Activated naive CD4-positive, alpha-beta T cell treated with anti-CD3 and anti-CD28 coated beads for 36 hours (primary cell): ENCODE measurements at regions of chr11 and their contacts with region 1.

Region 1: GRCh38 chr11:108733479-108734116 is 68.7 kb downstream of the DDX10 start:
- DNase-seq: peak; percentile 72
- H3K4me3 Mint-ChIP-seq: no peak overlapping the region
- H3K27ac Mint-ChIP-seq: peak overlapping the region; percentile 82
- H3K4me1 Mint-ChIP-seq: peaks cover 41% of the 10 kb centered on the region
- H3K27me3 Mint-ChIP-seq: no peaks in the 10 kb centered on the region

Region 2: GRCh38 chr11:108467091-108467823 is 266.3 kb before region 1 on chr11 and contains the start of gene C11orf65:
- CTCF ChIA-PET with region 1: no interaction called
- intact Hi-C with region 1: loop called (anchors 1 kb)
- DNase-seq: peak; percentile 98
- H3K4me3 Mint-ChIP-seq: peak within 1 kb of the TSS; percentile 94
- H3K27ac Mint-ChIP-seq: peak within 1 kb of the TSS; percentile 96
- H3K4me1 Mint-ChIP-seq: peaks cover 8% of the 10 kb centered on the region
- H3K27me3 Mint-ChIP-seq: no peaks in the 10 kb centered on the region
- total RNA-seq, gene C11orf65: 2.2 to 3.1 TPM

Region 3: GRCh38 chr11:108664730-108665525 is 68.7 kb before region 1 on chr11 and contains the start of gene DDX10:
- CTCF ChIA-PET with region 1: interaction called, 3 read pairs
- intact Hi-C with region 1: loop called (anchors 1 kb)
- DNase-seq: peak; percentile 99
- H3K4me3 Mint-ChIP-seq: peak within 1 kb of the TSS; percentile 99
- H3K27ac Mint-ChIP-seq: peak within 1 kb of the TSS; percentile 86
- H3K4me1 Mint-ChIP-seq: peaks cover 38% of the 10 kb centered on the region
- H3K27me3 Mint-ChIP-seq: no peaks in the 10 kb centered on the region
- total RNA-seq, gene DDX10: 36.6 to 43.0 TPM

Region 4: GRCh38 chr11:108752297-108752751 is 18.7 kb after region 1 on chr11:
- CTCF ChIA-PET with region 1: interaction called, 4 read pairs
- intact Hi-C with region 1: loop called (anchors 1 kb)
- DNase-seq: no peak
- H3K4me3 Mint-ChIP-seq: no peak overlapping the region
- H3K27ac Mint-ChIP-seq: no peak overlapping the region
- H3K4me1 Mint-ChIP-seq: peaks cover 43% of the 10 kb centered on the region
- H3K27me3 Mint-ChIP-seq: no peaks in the 10 kb centered on the region

Region 5: DNA sequence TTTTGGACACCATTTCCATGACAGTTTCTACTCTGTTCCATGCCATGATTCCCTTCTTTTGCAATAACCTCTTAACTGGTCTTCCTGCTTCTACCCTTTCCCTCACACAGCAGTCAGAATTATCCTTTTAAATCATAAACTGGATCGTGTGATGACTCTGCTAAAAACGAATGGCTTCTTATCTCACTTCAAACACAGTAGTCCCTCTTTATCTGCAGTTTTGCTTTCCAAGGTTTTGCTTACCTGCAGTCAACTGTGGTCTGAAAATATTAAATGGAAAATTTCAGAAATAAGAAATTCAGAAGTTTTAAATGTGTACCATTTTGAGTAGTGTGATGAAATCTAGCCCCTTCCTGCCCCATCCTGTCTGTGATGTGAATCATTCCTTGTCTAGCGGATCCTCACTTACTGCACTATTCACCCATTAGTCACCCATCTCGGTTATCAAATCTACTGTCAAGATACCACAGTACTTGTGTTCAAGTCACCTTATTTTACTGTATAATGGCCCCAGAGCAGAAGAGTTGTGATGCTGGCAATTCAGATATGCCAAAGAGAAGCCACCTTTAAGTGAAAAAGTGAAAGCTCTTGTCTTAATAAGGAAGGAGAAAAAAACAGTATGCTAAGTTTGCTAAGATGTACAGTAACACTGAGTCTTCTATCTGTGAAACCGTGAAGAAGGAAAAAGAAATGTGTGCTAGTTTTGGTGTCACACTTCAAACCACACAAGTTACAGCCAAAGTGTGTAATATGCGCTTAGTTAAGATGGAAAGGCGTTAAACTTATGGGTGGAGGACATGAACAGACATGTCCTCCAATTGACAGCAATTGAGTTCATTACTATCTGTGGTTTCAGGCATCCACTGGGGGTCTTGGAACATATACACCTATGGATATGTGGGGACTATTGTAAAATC is 214.3 kb after region 1 on chr11:
- CTCF ChIA-PET with region 1: no interaction called
- intact Hi-C with region 1: loop called (anchors 1 kb)
- DNase-seq: no peak
- H3K4me3 Mint-ChIP-seq: no peak overlapping the region
- H3K27ac Mint-ChIP-seq: peak overlapping the region; percentile 60
- H3K4me1 Mint-ChIP-seq: peaks cover 5% of the 10 kb centered on the region
- H3K27me3 Mint-ChIP-seq: no peaks in the 10 kb centered on the region